CD8-positive, alpha-beta T cell (primary cell): ENCODE measurements at regions of chr16 and their contacts with region 1.

Region 1: DNA sequence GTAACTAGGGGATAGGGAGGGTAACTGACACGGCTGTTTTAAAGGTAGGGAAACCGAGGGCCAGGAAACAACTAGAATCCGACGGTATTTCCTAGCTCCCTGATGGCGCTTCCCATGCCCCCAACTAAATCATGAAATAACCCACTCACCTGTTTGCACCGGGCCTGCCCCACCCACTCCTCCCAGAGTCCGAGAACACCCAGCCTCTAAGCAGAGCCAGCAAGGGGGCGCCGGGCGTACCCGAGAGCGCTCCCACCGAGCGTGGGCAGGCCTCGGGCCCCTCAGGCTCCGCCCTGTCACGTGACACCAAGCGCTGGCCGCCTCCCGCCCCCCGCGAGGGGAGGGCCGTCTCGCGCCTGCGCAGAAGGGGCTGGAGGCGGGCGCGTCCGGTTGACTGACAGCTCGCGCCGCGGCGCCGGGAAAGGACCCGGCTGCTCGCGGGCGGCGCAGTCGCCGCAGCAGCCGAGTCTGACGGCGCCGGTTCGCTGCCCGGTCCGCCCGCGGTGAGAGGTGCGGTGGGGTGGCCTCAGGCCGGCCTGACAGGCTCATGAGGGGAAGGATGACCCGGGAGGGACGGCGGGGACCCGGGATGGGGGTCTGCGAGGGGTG is at the start of gene KIAA0513:
- DNase-seq: peak; percentile 91 to 98 (median 97)
- ATAC-seq: peak; percentile 62
- H3K4me3 ChIP-seq: peak within 1 kb of the TSS; percentile 64 to 71
- H3K4me3 Mint-ChIP-seq: peak within 1 kb of the TSS; percentile 90
- H3K27ac ChIP-seq: peak within 1 kb of the TSS; percentile 62 to 73
- H3K27ac Mint-ChIP-seq: peak within 1 kb of the TSS; percentile 97
- H3K4me1 ChIP-seq: peaks cover 31% of the 10 kb centered on the region
- H3K4me1 Mint-ChIP-seq: peaks cover 43% of the 10 kb centered on the region
- H3K27me3 ChIP-seq: no peaks in the 10 kb centered on the region
- H3K27me3 Mint-ChIP-seq: no peaks in the 10 kb centered on the region
- CTCF ChIP-seq: no peak
- total RNA-seq, gene KIAA0513: 9.7 to 10.3 TPM

Region 2: DNA sequence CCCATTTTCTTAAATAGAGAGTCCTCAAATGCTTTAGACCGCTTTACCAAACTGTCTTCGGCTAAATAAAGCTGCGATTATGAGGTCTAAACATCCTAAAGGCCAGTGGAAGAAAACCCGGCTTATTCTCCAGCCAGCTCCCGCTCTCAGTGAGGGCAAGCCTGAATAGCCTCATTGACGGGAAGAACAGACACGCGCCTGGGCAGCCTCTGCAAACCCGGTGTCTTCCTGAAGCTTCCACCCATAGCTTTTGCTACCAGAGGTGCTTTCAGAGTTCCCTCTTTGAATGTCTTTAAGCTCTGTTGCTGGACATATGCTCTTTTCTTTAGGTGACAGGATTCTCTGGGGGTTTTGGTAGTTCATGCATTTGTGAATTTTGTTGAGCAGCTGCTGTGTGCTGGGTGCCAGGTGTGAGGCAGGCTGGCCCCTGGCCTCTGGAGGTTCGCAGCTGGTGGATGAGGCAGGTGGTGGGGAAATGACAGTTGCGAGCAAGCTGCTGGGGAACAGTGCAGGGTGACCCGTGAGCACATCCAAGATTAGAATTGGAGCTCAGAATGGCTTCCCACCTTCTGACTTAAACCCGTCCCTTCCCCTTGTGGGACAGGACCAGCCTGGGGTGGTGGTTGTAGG is 163.0 kb before region 1 on chr16:
- CTCF ChIA-PET with region 1: no interaction called
- POLR2A ChIA-PET with region 1: no interaction called
- intact Hi-C with region 1: no loop called
- DNase-seq: no peak
- ATAC-seq: no peak
- H3K4me3 ChIP-seq: no peak overlapping the region
- H3K4me3 Mint-ChIP-seq: no peak overlapping the region
- H3K27ac ChIP-seq: no peak overlapping the region
- H3K27ac Mint-ChIP-seq: no peak overlapping the region
- H3K4me1 ChIP-seq: no peaks in the 10 kb centered on the region
- H3K4me1 Mint-ChIP-seq: no peaks in the 10 kb centered on the region
- H3K27me3 ChIP-seq: no peaks in the 10 kb centered on the region
- H3K27me3 Mint-ChIP-seq: peaks cover 14% of the 10 kb centered on the region
- CTCF ChIP-seq: no peak

Region 3: DNA sequence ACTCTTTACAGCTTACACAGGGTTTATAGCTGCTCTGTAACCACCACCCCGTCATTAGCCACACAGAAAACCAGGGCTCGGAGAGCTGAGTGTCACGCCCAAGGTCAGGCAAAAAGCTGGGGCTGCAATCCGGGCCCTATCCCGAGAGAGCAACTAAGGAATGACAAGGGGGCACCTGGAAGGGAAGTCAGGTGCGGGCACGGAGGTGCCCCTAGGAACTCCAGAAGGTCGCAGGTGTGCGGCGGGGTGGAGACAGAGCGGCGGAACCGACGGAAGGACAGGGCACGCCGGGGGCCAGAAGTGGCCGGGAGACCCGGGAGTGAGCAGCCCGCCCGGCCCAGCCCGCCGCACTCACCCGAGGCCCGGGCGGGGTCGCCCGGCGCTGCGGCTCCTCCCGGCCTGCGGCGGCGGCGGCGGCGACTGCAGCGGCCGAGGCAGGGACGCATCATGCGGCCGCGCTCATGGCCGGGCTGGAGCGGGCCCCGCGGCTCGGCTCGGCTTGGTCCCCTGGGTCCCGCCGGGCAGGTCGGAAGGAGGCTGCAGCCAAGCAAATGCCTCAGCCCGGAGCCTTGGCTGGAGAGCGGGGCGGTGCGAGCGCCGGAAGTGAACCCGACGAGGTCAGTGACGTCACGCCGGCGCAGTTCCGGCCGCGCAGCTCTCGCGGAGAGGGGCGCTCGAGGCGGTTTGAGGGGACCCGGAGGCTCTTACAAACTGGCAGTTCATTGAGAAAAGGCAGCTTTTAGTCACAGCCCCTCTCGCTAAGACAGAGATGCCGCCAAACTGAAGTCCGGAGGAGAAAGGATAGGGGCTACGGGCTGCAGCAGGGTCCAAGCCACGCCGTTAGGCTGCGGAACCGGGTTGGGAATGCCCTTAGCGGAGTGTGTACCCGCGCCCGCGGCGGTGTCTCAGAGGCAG is 16.3 kb before region 1 on chr16 and contains the start of gene ZDHHC7:
- CTCF ChIA-PET with region 1: interaction called, 9 read pairs
- POLR2A ChIA-PET with region 1: interaction called, 37 read pairs
- intact Hi-C with region 1: loop called (anchors 1 kb)
- DNase-seq: peak; percentile 75 to 94 (median 88)
- ATAC-seq: peak; percentile 88
- H3K4me3 ChIP-seq: peak within 1 kb of the TSS; percentile 69 to 99
- H3K4me3 Mint-ChIP-seq: peak within 1 kb of the TSS; percentile 99
- H3K27ac ChIP-seq: peak within 1 kb of the TSS; percentile 94 to 100
- H3K27ac Mint-ChIP-seq: peak within 1 kb of the TSS; percentile 99
- H3K4me1 ChIP-seq: peaks cover 32% of the 10 kb centered on the region
- H3K4me1 Mint-ChIP-seq: peaks cover 48% of the 10 kb centered on the region
- H3K27me3 ChIP-seq: no peaks in the 10 kb centered on the region
- H3K27me3 Mint-ChIP-seq: peaks cover 2% of the 10 kb centered on the region
- CTCF ChIP-seq: no peak
- total RNA-seq, gene ZDHHC7: 85.4 to 92.1 TPM

Region 4: DNA sequence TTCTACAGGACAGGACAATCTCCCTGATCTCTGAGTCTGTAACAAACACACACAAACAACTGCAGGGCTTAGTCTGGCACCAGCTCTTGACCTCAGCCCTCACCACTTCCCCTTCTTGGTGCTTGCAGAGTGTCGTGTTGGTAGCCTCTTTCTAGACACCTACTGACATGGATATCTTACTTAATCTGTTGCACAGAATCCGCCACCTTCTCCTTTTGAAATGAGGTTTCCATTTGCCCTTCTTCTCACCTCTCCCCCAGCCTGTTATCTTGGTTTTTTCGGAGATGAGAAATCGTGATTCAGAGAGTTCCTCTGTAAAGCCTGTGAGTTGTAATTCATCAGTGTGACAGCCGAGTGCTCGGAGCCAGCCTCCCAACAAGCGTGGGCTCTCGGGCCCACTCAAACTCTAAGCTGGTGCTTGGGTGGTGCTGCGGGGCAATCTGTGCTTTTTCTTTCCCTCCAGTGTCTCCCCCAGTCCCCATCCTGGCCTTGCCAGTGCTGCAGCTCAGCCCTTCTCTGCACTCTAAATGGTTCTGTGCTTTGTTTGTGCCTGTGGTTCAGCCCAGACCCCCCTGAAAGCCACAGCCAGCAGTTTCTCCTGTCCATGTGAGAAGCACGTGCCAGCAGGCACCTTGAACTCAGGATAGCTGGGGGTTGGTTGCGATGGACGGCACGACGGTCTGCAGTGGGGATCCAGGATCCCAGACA is 28.2 kb after region 1 on chr16:
- CTCF ChIA-PET with region 1: interaction called, 27 read pairs
- POLR2A ChIA-PET with region 1: interaction called, 37 read pairs
- intact Hi-C with region 1: loop called (anchors 1 kb)
- DNase-seq: peak; percentile 47 to 96 (median 77)
- ATAC-seq: peak; percentile 88
- H3K4me3 ChIP-seq: peak overlapping the region; percentile 30 to 33
- H3K4me3 Mint-ChIP-seq: peak overlapping the region; percentile 69
- H3K27ac ChIP-seq: peak overlapping the region; percentile 52 to 82
- H3K27ac Mint-ChIP-seq: peak overlapping the region; percentile 94
- H3K4me1 ChIP-seq: peaks cover 42% of the 10 kb centered on the region
- H3K4me1 Mint-ChIP-seq: peaks cover 67% of the 10 kb centered on the region
- H3K27me3 ChIP-seq: peaks cover 0 to 2% of the 10 kb centered on the region in 2 experiments
- H3K27me3 Mint-ChIP-seq: no peaks in the 10 kb centered on the region
- CTCF ChIP-seq: no peak

Region 5: GRCh38 chr16:85114909-85115567 is 87.6 kb after region 1 on chr16:
- CTCF ChIA-PET with region 1: interaction called, 4 read pairs
- POLR2A ChIA-PET with region 1: no interaction called
- intact Hi-C with region 1: loop called in 1 of 2 experiments (anchors 1 kb)
- DNase-seq: peak; percentile 62 to 86 (median 81)
- ATAC-seq: peak; percentile 88
- H3K4me3 ChIP-seq: no peak overlapping the region
- H3K4me3 Mint-ChIP-seq: peak overlapping the region; percentile 70
- H3K27ac ChIP-seq: peak overlapping the region in 1 of 2 experiments; percentile 29
- H3K27ac Mint-ChIP-seq: peak overlapping the region; percentile 79
- H3K4me1 ChIP-seq: peaks cover 4% of the 10 kb centered on the region
- H3K4me1 Mint-ChIP-seq: peaks cover 11% of the 10 kb centered on the region
- H3K27me3 ChIP-seq: no peaks in the 10 kb centered on the region
- H3K27me3 Mint-ChIP-seq: no peaks in the 10 kb centered on the region
- CTCF ChIP-seq: peak; percentile 88